ENCODE measurements at regions of chr5 and their contacts with region 1.

Region 1: DNA sequence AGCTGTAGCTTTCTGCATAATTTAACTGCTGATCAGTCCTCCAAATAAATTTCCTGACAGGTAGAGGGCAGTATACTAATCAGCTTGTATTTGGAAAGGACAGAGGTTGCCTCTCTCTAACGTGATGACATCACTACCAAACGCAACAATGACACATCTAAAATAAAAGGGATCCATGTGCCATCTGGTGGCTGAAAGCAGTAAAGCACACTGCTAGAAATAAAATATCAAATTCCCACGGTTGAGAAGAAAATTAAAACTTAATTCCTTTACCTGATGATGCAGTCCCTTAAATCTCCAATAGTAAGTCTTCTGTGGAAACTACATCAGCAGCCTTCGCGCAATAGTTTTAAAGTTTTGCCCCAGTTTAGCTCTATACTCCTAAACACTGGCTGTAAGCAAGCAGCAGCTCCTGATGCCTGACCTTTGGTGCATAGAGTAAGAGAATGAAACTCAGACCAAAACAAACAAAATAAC is 54.5 kb downstream of the DIAPH1 start:
- DNase-seq: peak; percentile 14 to 94 (median 48)
- ATAC-seq: peak; percentile 97
- H3K4me3 ChIP-seq: no peak overlapping the region
- H3K4me3 Mint-ChIP-seq: no peak overlapping the region
- H3K27ac ChIP-seq: peak overlapping the region; percentile 37 to 66
- H3K27ac Mint-ChIP-seq: peak overlapping the region; percentile 40
- H3K4me1 ChIP-seq: peaks cover 3% of the 10 kb centered on the region
- H3K4me1 Mint-ChIP-seq: peaks cover 39% of the 10 kb centered on the region
- H3K27me3 ChIP-seq: no peaks in the 10 kb centered on the region
- H3K27me3 Mint-ChIP-seq: no peaks in the 10 kb centered on the region
- CTCF ChIP-seq: peak; percentile 98

Region 2: DNA sequence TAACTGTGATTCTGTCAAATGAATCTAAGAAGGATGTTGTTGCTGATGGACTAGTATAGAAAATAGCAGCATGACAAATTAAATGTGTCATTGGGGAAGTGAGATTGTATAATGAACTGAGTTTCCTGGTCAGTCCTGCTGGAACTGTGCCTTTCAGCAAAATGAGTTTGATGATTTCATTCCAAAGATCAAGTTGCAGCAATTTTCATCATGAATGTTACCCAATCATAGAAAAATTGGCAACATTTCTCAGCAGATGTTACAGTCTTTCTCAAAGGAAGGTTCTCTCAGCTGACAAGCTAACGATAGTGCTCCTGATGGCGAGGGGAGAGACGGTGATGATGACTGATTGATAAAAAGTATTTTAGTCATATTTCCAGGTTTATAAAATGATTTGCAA is 587.3 kb before region 1 on chr5:
- CTCF ChIA-PET with region 1: no interaction called
- POLR2A ChIA-PET with region 1: no interaction called
- intact Hi-C with region 1: no loop called
- DNase-seq: no peak
- ATAC-seq: no peak
- H3K4me3 ChIP-seq: no peak overlapping the region
- H3K4me3 Mint-ChIP-seq: no peak overlapping the region
- H3K27ac ChIP-seq: no peak overlapping the region
- H3K27ac Mint-ChIP-seq: no peak overlapping the region
- H3K4me1 ChIP-seq: no peaks in the 10 kb centered on the region
- H3K4me1 Mint-ChIP-seq: no peaks in the 10 kb centered on the region
- H3K27me3 ChIP-seq: peaks cover 0 to 6% of the 10 kb centered on the region in 2 experiments
- H3K27me3 Mint-ChIP-seq: peaks cover 36% of the 10 kb centered on the region
- CTCF ChIP-seq: no peak

Region 3: DNA sequence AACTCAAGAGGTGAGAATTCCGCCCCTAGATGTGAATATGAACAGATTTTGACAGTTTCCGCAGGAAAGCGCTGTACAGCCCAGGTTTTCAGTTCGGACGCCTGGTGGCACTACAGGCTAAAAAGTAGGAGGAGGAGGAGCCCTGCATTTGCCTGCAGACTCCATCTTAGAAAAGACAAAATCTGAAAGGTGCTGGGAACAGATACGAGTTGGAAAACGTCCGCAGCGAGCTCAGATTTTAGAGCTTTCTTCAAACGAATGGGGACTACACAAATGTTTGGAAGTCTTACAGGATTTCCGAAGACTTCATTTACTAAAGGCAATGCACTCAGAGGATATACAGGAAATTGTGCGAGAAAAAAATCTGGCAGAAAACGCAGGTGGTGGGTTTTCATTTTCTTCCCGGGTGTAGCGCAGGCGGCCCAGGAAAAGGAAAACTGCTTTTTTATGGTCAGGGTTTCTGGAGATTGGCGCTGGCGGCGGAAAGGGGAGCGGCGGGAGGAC is 479.7 kb before region 1 on chr5:
- CTCF ChIA-PET with region 1: no interaction called
- POLR2A ChIA-PET with region 1: no interaction called
- intact Hi-C with region 1: loop called in 1 of 2 experiments (anchors 5 kb)
- DNase-seq: peak in 12 of 14 experiments; percentile 5 to 70 (median 30)
- ATAC-seq: peak; percentile 89
- H3K4me3 ChIP-seq: peak overlapping the region; percentile 50
- H3K4me3 Mint-ChIP-seq: peak overlapping the region; percentile 94
- H3K27ac ChIP-seq: no peak overlapping the region
- H3K27ac Mint-ChIP-seq: peak overlapping the region; percentile 50
- H3K4me1 ChIP-seq: peaks cover 2% of the 10 kb centered on the region
- H3K4me1 Mint-ChIP-seq: peaks cover 7% of the 10 kb centered on the region
- H3K27me3 ChIP-seq: peaks cover 0 to 5% of the 10 kb centered on the region in 2 experiments
- H3K27me3 Mint-ChIP-seq: peaks cover 64% of the 10 kb centered on the region
- CTCF ChIP-seq: peak; percentile 39

Region 4: GRCh38 chr5:141320225-141321169 is 243.8 kb before region 1 on chr5 and contains the start of gene TAF7:
- CTCF ChIA-PET with region 1: interaction called, 40 read pairs
- POLR2A ChIA-PET with region 1: interaction called, 32 read pairs
- intact Hi-C with region 1: loop called (anchors 1 to 2 kb)
- DNase-seq: peak; percentile 85 to 96 (median 91)
- ATAC-seq: peak; percentile 87
- H3K4me3 ChIP-seq: peak within 1 kb of the TSS; percentile 78
- H3K4me3 Mint-ChIP-seq: peak within 1 kb of the TSS; percentile 95
- H3K27ac ChIP-seq: peak within 1 kb of the TSS; percentile 93 to 99
- H3K27ac Mint-ChIP-seq: peak within 1 kb of the TSS; percentile 97
- H3K4me1 ChIP-seq: peaks cover 14% of the 10 kb centered on the region
- H3K4me1 Mint-ChIP-seq: peaks cover 37% of the 10 kb centered on the region
- H3K27me3 ChIP-seq: no peaks in the 10 kb centered on the region
- H3K27me3 Mint-ChIP-seq: no peaks in the 10 kb centered on the region
- CTCF ChIP-seq: peak; percentile 80
- total RNA-seq, gene TAF7: 80.5 TPM

Region 5: GRCh38 chr5:141412854-141413539 is 151.3 kb before region 1 on chr5 and contains the start of gene PCDHGA10:
- CTCF ChIA-PET with region 1: interaction called, 19 read pairs
- POLR2A ChIA-PET with region 1: interaction called, 3 read pairs
- intact Hi-C with region 1: loop called (anchors 2 to 5 kb)
- DNase-seq: peak in 13 of 14 experiments; percentile 26 to 72 (median 39)
- ATAC-seq: peak; percentile 88
- H3K4me3 ChIP-seq: peak within 1 kb of the TSS; percentile 53
- H3K4me3 Mint-ChIP-seq: peak within 1 kb of the TSS; percentile 92
- H3K27ac ChIP-seq: no peak within 1 kb of the TSS
- H3K27ac Mint-ChIP-seq: no peak within 1 kb of the TSS
- H3K4me1 ChIP-seq: peaks cover 15% of the 10 kb centered on the region
- H3K4me1 Mint-ChIP-seq: peaks cover 24% of the 10 kb centered on the region
- H3K27me3 ChIP-seq: peaks cover 63 to 84% of the 10 kb centered on the region in 2 experiments
- H3K27me3 Mint-ChIP-seq: peaks cover 82% of the 10 kb centered on the region
- CTCF ChIP-seq: peak; percentile 71
- total RNA-seq, gene PCDHGA10: 0.08 TPM in 1 of 2 experiments, not detected in the other

Region 6: GRCh38 chr5:141618804-141619554 is 54.7 kb after region 1 on chr5 and contains the start of gene DIAPH1:
- CTCF ChIA-PET with region 1: interaction called, 15 read pairs
- POLR2A ChIA-PET with region 1: interaction called, 3 read pairs
- intact Hi-C with region 1: no loop called
- DNase-seq: peak; percentile 95 to 99 (median 98)
- ATAC-seq: peak; percentile 90
- H3K4me3 ChIP-seq: peak within 1 kb of the TSS; percentile 96
- H3K4me3 Mint-ChIP-seq: peak within 1 kb of the TSS; percentile 98
- H3K27ac ChIP-seq: peak within 1 kb of the TSS; percentile 91 to 94
- H3K27ac Mint-ChIP-seq: peak within 1 kb of the TSS; percentile 92
- H3K4me1 ChIP-seq: peaks cover 25% of the 10 kb centered on the region
- H3K4me1 Mint-ChIP-seq: peaks cover 66% of the 10 kb centered on the region
- H3K27me3 ChIP-seq: no peaks in the 10 kb centered on the region
- H3K27me3 Mint-ChIP-seq: no peaks in the 10 kb centered on the region
- CTCF ChIP-seq: peak; percentile 86
- total RNA-seq, gene DIAPH1: 159 to 161 TPM